Naive thymus-derived CD8-positive, alpha-beta T cell (primary cell): ENCODE measurements at regions of chr11 and their contacts with region 1.

Region 1: GRCh38 chr11:32918427-32918826 is 25.8 kb downstream of the QSER1 start:
- DNase-seq: no peak
- ATAC-seq: no peak
- H3K4me3 Mint-ChIP-seq: no peak overlapping the region
- H3K27ac Mint-ChIP-seq: peak overlapping the region in 1 of 10 donors; percentile 23
- H3K4me1 Mint-ChIP-seq: peaks cover 17 to 35% (median 19%) of the 10 kb centered on the region in 4 donors
- H3K27me3 Mint-ChIP-seq: no peaks in the 10 kb centered on the region

Region 2: DNA sequence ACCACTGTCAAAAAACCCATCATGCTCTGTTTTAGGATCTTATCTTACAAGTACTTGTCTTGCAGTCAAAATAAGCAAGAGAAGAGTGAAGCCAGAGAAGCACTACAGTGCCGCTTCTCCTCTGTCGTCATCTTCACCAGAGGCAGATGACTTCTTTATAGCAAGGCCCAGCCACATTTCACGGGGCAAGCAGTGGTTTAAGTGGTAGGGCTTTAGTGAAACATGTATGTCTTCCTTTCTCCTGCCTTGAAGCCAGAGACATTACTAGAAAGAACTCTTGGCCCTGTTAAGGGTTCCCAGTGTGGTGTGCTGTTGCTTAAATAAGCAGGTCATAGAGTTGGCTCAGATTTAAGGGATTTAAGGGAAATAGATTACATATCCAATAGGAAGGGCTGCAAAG is 54.4 kb after region 1 on chr11:
- POLR2A ChIA-PET with region 1: interaction called, 10 read pairs
- DNase-seq: no peak
- ATAC-seq: no peak
- H3K4me3 Mint-ChIP-seq: no peak overlapping the region
- H3K27ac Mint-ChIP-seq: peak overlapping the region in 1 of 10 donors; percentile 12
- H3K4me1 Mint-ChIP-seq: peaks cover 0 to 2% (median 0%) of the 10 kb centered on the region in 4 donors
- H3K27me3 Mint-ChIP-seq: no peaks in the 10 kb centered on the region